ENCODE measurements at regions of chr3 and their contacts with region 1.

Region 1: DNA sequence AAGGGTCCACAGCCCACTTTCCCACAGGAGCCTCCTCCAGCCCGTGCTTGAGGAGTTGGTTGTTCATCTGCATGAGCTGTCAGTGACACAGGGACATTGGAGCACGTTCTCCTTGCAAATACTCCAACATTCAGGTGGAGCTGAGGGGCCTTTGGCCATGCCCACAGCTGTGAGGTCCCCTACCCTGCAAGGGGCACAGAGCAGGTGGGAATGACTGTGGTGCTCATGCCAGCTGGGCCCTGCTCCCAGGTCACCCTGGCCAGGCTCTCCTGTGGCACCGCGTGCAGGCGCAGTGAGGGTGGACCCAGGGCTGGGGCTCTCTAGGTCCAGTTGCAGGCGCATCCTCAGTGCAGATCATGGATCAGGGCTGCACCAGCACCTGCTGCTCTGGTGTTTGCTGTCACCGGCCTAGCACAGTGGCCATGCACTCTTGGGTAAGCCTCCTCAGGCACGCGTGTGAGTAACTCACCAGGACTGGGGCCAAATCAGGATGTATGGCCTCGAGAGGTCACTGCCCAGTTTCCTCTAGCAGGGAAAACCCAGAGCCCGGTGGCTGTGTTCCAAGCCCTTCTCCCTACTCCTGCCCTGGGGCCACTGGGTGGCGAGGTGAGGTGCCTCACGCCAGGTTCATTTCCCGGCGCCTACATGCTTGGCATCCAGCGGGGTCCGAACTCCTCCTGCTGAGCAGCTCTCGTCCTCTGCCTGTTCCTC is 45.4 kb upstream of the SLC41A3 start:
- DNase-seq: peak; percentile 28 to 86
- H3K4me3 ChIP-seq: no peak overlapping the region
- H3K27ac ChIP-seq: peak overlapping the region; percentile 15 to 77 (median 29)
- H3K4me1 ChIP-seq: peaks cover 6 to 20% (median 18%) of the 10 kb centered on the region in 4 donors
- H3K27me3 ChIP-seq: no peaks in the 10 kb centered on the region
- CTCF ChIP-seq: no peak
- EP300 ChIP-seq: no peak
- POLR2A ChIP-seq: no peak

Region 2: GRCh38 chr3:125694761-125695294 is 434.5 kb before region 1 on chr3:
- intact Hi-C with region 1: no loop called
- DNase-seq: peak; percentile 33 to 56
- H3K4me3 ChIP-seq: no peak overlapping the region
- H3K27ac ChIP-seq: no peak overlapping the region
- H3K4me1 ChIP-seq: peaks cover 0 to 9% (median 3%) of the 10 kb centered on the region in 4 donors
- H3K27me3 ChIP-seq: no peaks in the 10 kb centered on the region
- CTCF ChIP-seq: no peak
- EP300 ChIP-seq: no peak
- POLR2A ChIP-seq: no peak

Region 3: GRCh38 chr3:126077754-126078153 is 51.6 kb before region 1 on chr3:
- intact Hi-C with region 1: no loop called
- DNase-seq: no peak
- H3K4me3 ChIP-seq: no peak overlapping the region
- H3K27ac ChIP-seq: no peak overlapping the region
- H3K4me1 ChIP-seq: peaks cover 1 to 13% (median 6%) of the 10 kb centered on the region in 4 donors
- H3K27me3 ChIP-seq: no peaks in the 10 kb centered on the region
- CTCF ChIP-seq: no peak
- EP300 ChIP-seq: no peak
- POLR2A ChIP-seq: no peak

Region 4: GRCh38 chr3:126394575-126395228 is 265.4 kb after region 1 on chr3 and contains the start of gene CFAP100:
- intact Hi-C with region 1: loop called (anchors 10 kb)
- DNase-seq: peak; percentile 44 to 89
- H3K4me3 ChIP-seq: peak within 1 kb of the TSS; percentile 29 to 42 (median 34)
- H3K27ac ChIP-seq: no peak within 1 kb of the TSS
- H3K4me1 ChIP-seq: peaks cover 6 to 12% (median 7%) of the 10 kb centered on the region in 4 donors
- H3K27me3 ChIP-seq: peaks cover 0 to 37% (median 19%) of the 10 kb centered on the region in 3 donors
- CTCF ChIP-seq: no peak
- EP300 ChIP-seq: no peak
- POLR2A ChIP-seq: no peak
- total RNA-seq, gene CFAP100: not detected